OCI-LY7 (cell line): ENCODE measurements at regions of chr4 and their contacts with region 1.

Region 1: DNA sequence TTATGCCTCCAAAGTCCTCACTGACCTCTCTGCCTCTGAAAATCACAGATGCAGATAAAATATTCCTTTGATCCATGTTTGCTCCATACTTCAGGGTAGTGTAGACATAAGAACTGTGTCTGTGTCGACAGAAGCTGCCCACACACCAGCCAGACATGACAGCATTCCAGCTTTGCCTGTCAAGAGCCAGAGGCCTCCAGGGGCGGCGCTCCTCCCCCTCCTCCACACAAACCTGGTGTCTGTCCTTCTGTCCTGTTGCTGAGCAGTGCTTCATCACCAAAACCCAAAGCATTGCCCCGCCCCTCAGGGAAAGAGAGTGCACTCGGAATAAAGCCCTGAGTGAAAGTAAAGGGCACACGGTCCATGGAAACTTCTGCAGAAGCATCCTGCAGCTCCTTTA is 379.4 kb downstream of the FBXW7 start:
- DNase-seq: no peak
- H3K4me3 ChIP-seq: no peak overlapping the region
- H3K27ac ChIP-seq: no peak overlapping the region
- H3K4me1 ChIP-seq: no peaks in the 10 kb centered on the region
- CTCF ChIP-seq: no peak

Region 2: GRCh38 chr4:151223465-151223864 is 933.0 kb before region 1 on chr4:
- CTCF ChIA-PET with region 1: no interaction called
- POLR2A ChIA-PET with region 1: interaction called, 10 read pairs
- intact Hi-C with region 1: no loop called
- DNase-seq: no peak
- H3K4me3 ChIP-seq: no peak overlapping the region
- H3K27ac ChIP-seq: no peak overlapping the region
- H3K4me1 ChIP-seq: no peaks in the 10 kb centered on the region
- CTCF ChIP-seq: no peak

Region 3: DNA sequence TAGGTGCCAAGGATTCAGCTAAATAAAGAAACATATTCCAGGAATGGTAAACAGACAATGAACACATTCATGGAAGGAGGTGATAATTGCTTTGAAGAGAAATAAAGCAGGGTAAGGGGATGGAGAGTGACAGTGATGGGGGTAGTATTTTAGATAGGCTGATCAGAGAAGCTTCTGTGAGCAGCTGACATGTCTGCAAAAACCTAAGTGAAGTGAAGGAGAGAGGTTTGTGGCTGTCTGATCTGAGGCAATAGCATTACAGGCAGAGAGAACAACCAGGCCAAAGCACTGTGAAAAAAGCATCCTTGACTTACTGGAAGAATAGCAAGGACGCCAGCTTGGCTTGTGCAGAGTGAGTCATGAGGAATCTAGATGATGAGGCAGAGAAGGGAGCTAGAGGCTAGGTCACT is 123.7 kb before region 1 on chr4:
- CTCF ChIA-PET with region 1: no interaction called
- POLR2A ChIA-PET with region 1: no interaction called
- intact Hi-C with region 1: no loop called
- DNase-seq: no peak
- H3K4me3 ChIP-seq: no peak overlapping the region
- H3K27ac ChIP-seq: no peak overlapping the region
- H3K4me1 ChIP-seq: no peaks in the 10 kb centered on the region
- CTCF ChIP-seq: no peak

Region 4: DNA sequence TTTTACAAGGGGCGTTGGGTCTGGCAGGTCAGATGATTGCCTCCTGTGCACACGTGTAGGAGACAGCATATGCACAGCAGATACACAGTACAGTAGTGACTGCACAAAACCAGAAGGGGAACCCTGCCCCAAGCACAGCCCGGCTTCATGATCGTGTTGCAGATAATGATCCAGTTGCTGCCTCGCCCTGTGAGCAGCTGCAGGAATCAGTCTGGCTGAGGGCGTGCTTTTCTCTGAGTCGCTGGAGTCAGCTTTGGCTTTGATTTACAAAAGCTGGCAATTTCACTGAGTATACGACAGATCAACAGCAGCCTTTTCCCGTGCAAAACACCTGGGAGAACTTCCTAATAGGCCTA is 92.6 kb before region 1 on chr4:
- CTCF ChIA-PET with region 1: no interaction called
- POLR2A ChIA-PET with region 1: no interaction called
- intact Hi-C with region 1: no loop called
- DNase-seq: no peak
- H3K4me3 ChIP-seq: no peak overlapping the region
- H3K27ac ChIP-seq: no peak overlapping the region
- H3K4me1 ChIP-seq: no peaks in the 10 kb centered on the region
- CTCF ChIP-seq: no peak